ENCODE measurements at regions of chr2 and their contacts with region 1.

Region 1: DNA sequence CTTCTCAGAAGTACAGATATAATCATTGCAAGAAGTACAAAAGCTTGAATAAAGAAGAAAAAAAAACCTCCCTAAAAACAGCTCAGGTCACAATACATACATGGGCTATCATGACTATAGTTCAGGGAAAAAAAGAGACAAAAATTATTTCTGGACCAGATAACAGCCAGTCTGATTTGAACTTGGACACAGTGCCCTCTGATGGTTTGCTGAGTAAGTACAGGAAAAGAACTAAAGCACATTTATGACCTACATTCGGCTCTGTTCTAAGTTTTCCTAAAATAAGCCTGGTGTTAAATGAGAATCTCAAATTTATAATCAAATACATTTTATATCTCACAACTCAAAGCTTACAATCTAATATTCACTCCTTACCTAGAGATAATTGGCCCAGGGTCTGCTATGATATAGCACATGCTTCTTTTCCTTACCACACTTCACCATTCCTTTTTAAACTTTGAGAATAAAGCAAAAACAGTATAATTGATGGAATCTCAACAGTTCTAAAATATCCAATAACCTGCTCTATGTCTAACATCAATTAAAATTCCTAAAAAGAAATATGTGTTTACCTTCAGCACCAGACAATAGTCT is 81.1 kb downstream of the RAPH1 start:
- DNase-seq: peak; percentile 79
- H3K4me3 Mint-ChIP-seq: no peak overlapping the region
- H3K27ac Mint-ChIP-seq: no peak overlapping the region
- H3K4me1 Mint-ChIP-seq: peaks cover 1% of the 10 kb centered on the region
- H3K27me3 Mint-ChIP-seq: no peaks in the 10 kb centered on the region

Region 2: DNA sequence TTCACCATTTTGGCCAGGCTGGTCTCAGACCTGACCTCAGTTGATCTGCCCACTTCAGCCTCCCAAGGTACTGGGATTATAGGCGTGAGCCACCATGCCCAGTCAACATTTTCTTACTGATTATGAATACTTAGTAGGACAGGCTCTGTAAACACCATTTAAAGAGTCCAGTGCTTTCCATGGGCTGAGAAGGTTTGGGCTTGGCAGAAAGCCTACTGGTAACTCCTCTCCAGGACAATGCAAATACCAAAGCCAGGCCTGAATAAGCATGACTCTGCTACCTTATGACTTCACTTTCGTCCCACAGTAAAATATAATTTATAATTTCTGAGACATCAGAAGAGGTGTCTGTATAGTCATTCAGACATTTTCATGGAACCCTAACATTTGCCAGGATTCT is 879.4 kb before region 1 on chr2:
- intact Hi-C with region 1: loop called (anchors 2 kb)
- DNase-seq: peak; percentile 47
- H3K4me3 Mint-ChIP-seq: no peak overlapping the region
- H3K27ac Mint-ChIP-seq: no peak overlapping the region
- H3K4me1 Mint-ChIP-seq: no peaks in the 10 kb centered on the region
- H3K27me3 Mint-ChIP-seq: no peaks in the 10 kb centered on the region

Region 3: DNA sequence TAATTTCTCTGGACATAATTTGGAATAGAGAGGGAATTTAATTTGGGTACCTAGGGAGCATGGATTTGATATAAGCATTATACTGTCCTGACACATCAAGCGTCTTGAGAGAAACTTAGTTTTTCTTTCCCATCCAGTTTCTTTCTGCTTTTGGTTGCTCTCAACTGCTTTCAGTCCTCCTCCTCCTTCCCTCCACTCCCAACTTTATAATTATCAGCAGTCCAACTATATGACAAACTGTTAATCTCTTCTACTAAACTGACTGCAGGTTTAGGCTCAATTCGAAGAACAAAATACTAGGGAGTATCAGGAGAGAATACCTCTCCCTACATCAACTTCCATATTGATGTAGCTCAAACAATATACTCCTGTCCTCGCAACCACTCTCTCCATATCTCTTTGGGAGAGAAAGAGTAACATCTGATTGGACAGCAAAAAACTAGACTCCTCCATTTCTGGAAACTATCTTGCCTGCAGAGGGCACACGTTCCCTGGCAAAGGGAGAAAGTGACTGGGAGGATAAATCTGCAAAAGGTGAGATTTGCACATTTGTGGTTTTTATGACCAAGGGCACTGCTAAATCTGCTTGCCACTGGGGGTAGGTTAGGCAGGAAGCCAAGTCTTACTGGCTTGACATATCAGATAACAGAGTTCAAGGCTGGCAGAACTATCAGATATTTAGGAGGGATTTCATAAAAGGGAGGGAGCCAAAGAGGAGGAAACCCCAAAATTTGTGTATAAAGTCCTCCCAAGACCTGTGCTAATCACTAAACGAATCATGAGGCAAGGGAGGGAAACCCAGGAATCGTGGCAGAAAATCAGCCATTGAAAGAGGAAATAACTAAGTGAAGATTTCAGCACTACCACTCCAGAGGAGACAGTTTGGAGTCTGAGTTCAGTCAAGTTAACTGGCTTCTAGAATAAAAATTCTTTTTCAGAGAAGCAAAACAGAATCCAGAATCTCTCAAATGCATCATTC is 622.4 kb before region 1 on chr2:
- intact Hi-C with region 1: loop called (anchors 5 kb)
- DNase-seq: peak; percentile 81
- H3K4me3 Mint-ChIP-seq: no peak overlapping the region
- H3K27ac Mint-ChIP-seq: no peak overlapping the region
- H3K4me1 Mint-ChIP-seq: peaks cover 9% of the 10 kb centered on the region
- H3K27me3 Mint-ChIP-seq: no peaks in the 10 kb centered on the region

Region 4: GRCh38 chr2:203185864-203186263 is 268.1 kb before region 1 on chr2:
- intact Hi-C with region 1: no loop called
- DNase-seq: no peak
- H3K4me3 Mint-ChIP-seq: no peak overlapping the region
- H3K27ac Mint-ChIP-seq: no peak overlapping the region
- H3K4me1 Mint-ChIP-seq: no peaks in the 10 kb centered on the region
- H3K27me3 Mint-ChIP-seq: no peaks in the 10 kb centered on the region

Region 5: GRCh38 chr2:203225423-203226039 is 228.4 kb before region 1 on chr2:
- intact Hi-C with region 1: loop called (anchors 1 kb)
- DNase-seq: peak; percentile 77
- H3K4me3 Mint-ChIP-seq: no peak overlapping the region
- H3K27ac Mint-ChIP-seq: no peak overlapping the region
- H3K4me1 Mint-ChIP-seq: no peaks in the 10 kb centered on the region
- H3K27me3 Mint-ChIP-seq: no peaks in the 10 kb centered on the region

Region 6: GRCh38 chr2:203437511-203437910 is 16.4 kb before region 1 on chr2:
- intact Hi-C with region 1: no loop called
- DNase-seq: no peak
- H3K4me3 Mint-ChIP-seq: no peak overlapping the region
- H3K27ac Mint-ChIP-seq: no peak overlapping the region
- H3K4me1 Mint-ChIP-seq: no peaks in the 10 kb centered on the region
- H3K27me3 Mint-ChIP-seq: no peaks in the 10 kb centered on the region